CD4-positive, alpha-beta memory T cell (primary cell): ENCODE measurements at regions of chr17 and their contacts with region 1.

Region 1: GRCh38 chr17:74759243-74759801 is 10.9 kb downstream of the NHERF1 start:
- DNase-seq: peak; percentile 63 to 75 (median 64)
- H3K4me3 ChIP-seq: peak overlapping the region; percentile 34 to 54
- H3K4me3 Mint-ChIP-seq: peak overlapping the region; percentile 74 to 90 (median 84)
- H3K27ac ChIP-seq: peak overlapping the region; percentile 65
- H3K27ac Mint-ChIP-seq: peak overlapping the region; percentile 84 to 93 (median 90)
- H3K4me1 ChIP-seq: peaks cover 94% of the 10 kb centered on the region
- H3K4me1 Mint-ChIP-seq: peaks cover 42 to 84% (median 65%) of the 10 kb centered on the region in 4 donors
- H3K27me3 ChIP-seq: no peaks in the 10 kb centered on the region
- H3K27me3 Mint-ChIP-seq: no peaks in the 10 kb centered on the region

Region 2: GRCh38 chr17:74742153-74742515 is 17.2 kb before region 1 on chr17:
- CTCF ChIA-PET with region 1: interaction called, 128 read pairs
- POLR2A ChIA-PET with region 1: interaction called, 217 read pairs
- intact Hi-C with region 1: no loop called
- DNase-seq: peak in 4 of 5 donors; percentile 46 to 58 (median 57)
- H3K4me3 ChIP-seq: peak overlapping the region; percentile 20 to 30
- H3K4me3 Mint-ChIP-seq: peak overlapping the region; percentile 72 to 91 (median 79)
- H3K27ac ChIP-seq: peak overlapping the region; percentile 49
- H3K27ac Mint-ChIP-seq: peak overlapping the region in 6 of 7 donors; percentile 88 to 96 (median 90)
- H3K4me1 ChIP-seq: peaks cover 95% of the 10 kb centered on the region
- H3K4me1 Mint-ChIP-seq: peaks cover 54 to 95% (median 75%) of the 10 kb centered on the region in 4 donors
- H3K27me3 ChIP-seq: no peaks in the 10 kb centered on the region
- H3K27me3 Mint-ChIP-seq: no peaks in the 10 kb centered on the region

Region 3: DNA sequence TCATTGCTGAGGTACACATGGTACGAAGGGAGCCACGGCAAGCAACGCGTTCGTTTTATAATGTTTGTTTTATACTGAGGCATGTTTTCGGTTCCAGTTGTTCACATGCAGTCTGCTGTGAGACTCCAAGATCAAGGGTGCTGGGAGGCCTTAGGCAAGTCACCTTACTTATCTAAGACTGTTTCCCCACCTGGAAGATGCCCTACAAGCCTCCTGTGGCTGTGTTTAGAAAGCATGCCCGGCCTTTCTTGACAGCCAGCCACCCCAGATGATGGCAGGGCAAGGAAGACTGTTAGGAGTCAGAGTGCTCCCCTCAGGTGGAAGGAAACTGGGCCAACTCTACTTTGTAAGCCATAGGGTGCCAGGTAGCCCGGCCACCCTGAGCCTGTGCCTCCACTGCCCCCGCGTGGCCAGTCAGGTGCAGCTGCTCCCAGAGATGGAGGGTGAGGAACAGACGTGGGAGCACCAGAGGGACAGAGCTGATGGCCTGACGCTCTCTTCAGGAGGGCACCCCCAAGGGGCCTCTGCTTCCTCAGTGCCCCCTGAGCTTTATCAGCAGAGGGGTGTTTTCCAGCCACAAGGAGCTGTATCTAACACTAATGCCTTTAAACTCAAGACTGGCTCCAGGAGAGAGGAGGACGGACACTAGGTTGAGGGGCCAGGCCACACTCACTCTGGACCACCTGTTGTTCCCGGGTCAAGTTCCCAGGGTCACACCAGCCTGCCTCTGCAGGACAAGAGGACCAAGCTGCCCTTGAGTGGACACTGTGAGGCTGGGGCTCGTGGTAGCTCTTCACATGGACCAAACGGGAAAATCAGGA is 11.4 kb after region 1 on chr17:
- CTCF ChIA-PET with region 1: interaction called, 115 read pairs
- POLR2A ChIA-PET with region 1: interaction called, 489 read pairs
- intact Hi-C with region 1: no loop called
- DNase-seq: peak; percentile 79
- H3K4me3 ChIP-seq: no peak overlapping the region
- H3K4me3 Mint-ChIP-seq: peak overlapping the region in 3 of 8 donors; percentile 20 to 46 (median 24)
- H3K27ac ChIP-seq: peak overlapping the region; percentile 46
- H3K27ac Mint-ChIP-seq: peak overlapping the region; percentile 64 to 92 (median 89)
- H3K4me1 ChIP-seq: peaks cover 31% of the 10 kb centered on the region
- H3K4me1 Mint-ChIP-seq: peaks cover 21 to 67% (median 39%) of the 10 kb centered on the region in 4 donors
- H3K27me3 ChIP-seq: no peaks in the 10 kb centered on the region
- H3K27me3 Mint-ChIP-seq: no peaks in the 10 kb centered on the region

Region 4: DNA sequence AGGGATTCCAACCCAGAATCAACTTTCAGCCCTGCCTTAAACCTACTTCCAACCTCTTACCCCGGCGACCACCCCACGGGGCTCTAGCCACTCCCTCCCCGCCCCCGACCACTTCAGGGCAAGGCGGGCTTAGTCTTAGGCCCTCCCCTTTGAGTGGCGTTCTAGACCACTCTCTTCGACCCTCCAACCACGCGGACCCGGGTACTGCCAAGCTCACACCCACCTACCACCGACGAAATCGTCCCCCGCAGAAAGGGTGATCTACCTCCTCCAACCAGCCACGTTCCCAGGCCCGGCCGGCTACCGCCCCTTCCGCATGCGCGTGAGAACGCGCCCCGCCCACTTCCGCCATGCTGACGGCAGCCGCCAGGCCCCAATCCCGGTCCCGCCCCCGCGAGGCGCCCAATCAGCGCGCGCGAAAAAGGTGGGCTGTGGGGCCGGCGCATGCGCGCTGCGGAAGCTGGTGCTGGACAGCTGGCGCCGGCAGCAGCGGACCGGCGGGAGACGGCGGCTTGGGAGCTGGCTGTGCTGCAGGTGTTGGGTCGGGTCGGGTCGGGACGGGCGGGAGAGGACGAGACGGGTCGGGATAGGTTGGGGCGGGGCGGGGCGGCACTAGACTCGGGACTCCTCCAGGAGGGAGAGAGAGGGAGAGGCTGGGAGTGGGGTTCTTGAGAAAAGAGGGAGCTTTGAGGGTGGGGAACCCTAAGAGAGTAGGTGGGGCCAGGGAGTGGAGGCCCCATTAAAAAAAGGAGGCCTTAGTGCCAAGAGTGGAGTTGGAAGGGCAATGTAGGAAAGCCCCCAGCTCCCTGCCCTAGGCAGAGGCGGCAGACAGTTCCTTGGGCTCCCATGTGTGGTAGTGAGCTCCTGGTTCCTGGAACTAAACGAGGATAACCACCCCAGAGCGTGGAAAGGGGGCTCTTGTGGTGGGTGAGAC is 17.0 kb after region 1 on chr17 and contains the start of gene NAT9:
- CTCF ChIA-PET with region 1: interaction called, 115 read pairs
- POLR2A ChIA-PET with region 1: interaction called, 489 read pairs
- intact Hi-C with region 1: no loop called
- DNase-seq: peak; percentile 95 to 99 (median 97)
- H3K4me3 ChIP-seq: peak within 1 kb of the TSS; percentile 64 to 89
- H3K4me3 Mint-ChIP-seq: peak within 1 kb of the TSS; percentile 95 to 100 (median 99)
- H3K27ac ChIP-seq: peak within 1 kb of the TSS; percentile 77
- H3K27ac Mint-ChIP-seq: peak within 1 kb of the TSS; percentile 93 to 99 (median 97)
- H3K4me1 ChIP-seq: peaks cover 65% of the 10 kb centered on the region
- H3K4me1 Mint-ChIP-seq: peaks cover 45 to 83% (median 61%) of the 10 kb centered on the region in 4 donors
- H3K27me3 ChIP-seq: no peaks in the 10 kb centered on the region
- H3K27me3 Mint-ChIP-seq: no peaks in the 10 kb centered on the region
- total RNA-seq, gene NAT9: 60.0 to 70.3 TPM